Mammary epithelial cell (primary cell): ENCODE measurements at regions of chr16 and their contacts with region 1.

Region 1: DNA sequence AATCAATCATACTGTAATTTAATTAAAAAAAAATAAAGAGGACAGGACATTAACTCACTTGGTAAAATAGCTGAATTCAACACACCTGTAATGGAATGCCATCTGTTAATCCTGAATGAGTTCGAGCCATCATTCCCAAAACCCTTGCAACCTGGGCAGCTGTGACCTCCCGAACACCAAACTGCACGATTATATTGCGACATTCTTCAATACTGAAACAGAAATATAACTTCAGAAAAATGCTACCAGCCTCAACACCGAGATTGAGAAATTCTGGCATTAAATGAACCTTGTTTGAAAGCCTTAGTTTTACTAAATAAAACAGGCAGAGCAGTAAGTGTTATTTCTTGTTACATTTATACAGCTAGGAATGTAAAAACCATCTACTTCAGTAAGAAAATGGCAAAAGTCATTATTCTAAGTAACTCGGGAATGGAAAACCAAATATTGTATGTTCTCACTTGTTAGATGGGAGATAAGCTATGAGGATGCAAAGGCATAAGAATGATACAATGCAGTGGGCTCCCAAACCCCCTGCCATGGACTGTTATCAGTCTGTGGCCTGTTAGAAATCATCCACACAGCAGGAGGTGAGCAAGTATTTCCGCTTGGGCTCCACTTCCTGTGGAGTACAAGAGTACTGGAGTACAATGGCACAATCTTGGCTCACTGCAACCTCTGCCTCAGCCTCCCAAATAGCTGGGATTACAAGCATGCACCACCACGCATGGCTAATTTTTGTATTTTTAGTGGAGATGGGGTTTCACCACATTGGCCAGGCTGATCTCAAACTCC is 46.5 kb downstream of the CNOT1 start:
- DNase-seq: no peak
- H3K4me3 ChIP-seq: no peak overlapping the region
- H3K27ac ChIP-seq: no peak overlapping the region
- H3K4me1 ChIP-seq: no peaks in the 10 kb centered on the region
- H3K27me3 ChIP-seq: no peaks in the 10 kb centered on the region
- CTCF ChIP-seq: no peak

Region 2: GRCh38 chr16:58515125-58515870 is 67.9 kb before region 1 on chr16 and contains the start of gene SETD6:
- CTCF ChIA-PET with region 1: no interaction called
- dilution Hi-C with region 1: no loop called
- in situ Hi-C with region 1: loop called in 1 of 2 experiments (anchors 10 kb)
- intact Hi-C with region 1: no loop called
- DNase-seq: peak; percentile 77
- H3K4me3 ChIP-seq: peak within 1 kb of the TSS; percentile 49 to 84 (median 65)
- H3K27ac ChIP-seq: peak within 1 kb of the TSS; percentile 2
- H3K4me1 ChIP-seq: peaks cover 17% of the 10 kb centered on the region
- H3K27me3 ChIP-seq: no peaks in the 10 kb centered on the region
- CTCF ChIP-seq: peak in 1 of 2 donors; percentile 35
- total RNA-seq, gene SETD6: 12.5 to 14.4 TPM

Region 3: DNA sequence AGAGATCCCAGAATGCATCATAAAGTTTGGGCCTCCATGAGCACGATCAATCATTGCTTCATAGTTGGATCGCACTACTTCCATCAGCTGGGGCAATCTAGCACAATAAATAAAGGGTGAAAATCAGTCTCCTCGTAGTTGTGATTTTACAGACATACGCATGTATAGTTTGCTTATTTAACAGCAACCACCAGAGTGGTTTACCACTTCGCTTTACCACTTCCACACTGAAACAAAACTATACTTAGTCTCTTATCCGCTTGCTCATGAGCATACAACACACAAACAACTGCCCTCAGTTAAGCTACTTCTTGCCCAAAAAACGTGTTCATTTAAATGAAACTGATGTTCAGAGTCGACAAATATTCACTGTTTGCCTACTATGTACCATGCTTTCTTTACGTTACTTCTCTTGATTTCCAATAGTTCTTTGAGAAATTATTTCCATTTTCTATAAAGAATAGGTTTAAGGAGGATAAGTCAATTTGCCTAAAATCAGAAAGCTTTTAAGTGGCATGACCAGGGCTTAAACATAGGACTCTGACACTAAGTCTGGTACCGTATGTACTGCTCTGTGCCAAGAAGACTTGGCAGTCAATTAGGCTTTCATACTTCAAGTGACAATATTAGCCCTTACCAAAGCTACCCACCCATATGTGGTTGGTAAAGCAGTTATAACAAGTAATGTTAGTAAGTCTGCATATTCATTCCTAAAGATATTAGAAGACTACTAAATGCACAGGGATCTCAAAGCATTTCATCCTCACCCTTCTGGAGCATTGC is 45.9 kb before region 1 on chr16:
- CTCF ChIA-PET with region 1: no interaction called
- dilution Hi-C with region 1: loop called (anchors 5 kb)
- in situ Hi-C with region 1: no loop called
- intact Hi-C with region 1: loop called (anchors 5 kb)
- DNase-seq: no peak
- H3K4me3 ChIP-seq: no peak overlapping the region
- H3K27ac ChIP-seq: no peak overlapping the region
- H3K4me1 ChIP-seq: no peaks in the 10 kb centered on the region
- H3K27me3 ChIP-seq: no peaks in the 10 kb centered on the region
- CTCF ChIP-seq: no peak

Region 4: GRCh38 chr16:58548378-58548777 is 34.8 kb before region 1 on chr16:
- CTCF ChIA-PET with region 1: no interaction called
- dilution Hi-C with region 1: no loop called
- in situ Hi-C with region 1: no loop called
- intact Hi-C with region 1: loop called (anchors 5 kb)
- DNase-seq: no peak
- H3K4me3 ChIP-seq: no peak overlapping the region
- H3K27ac ChIP-seq: no peak overlapping the region
- H3K4me1 ChIP-seq: no peaks in the 10 kb centered on the region
- H3K27me3 ChIP-seq: no peaks in the 10 kb centered on the region
- CTCF ChIP-seq: no peak